ENCODE measurements at regions of chr3 and their contacts with region 1.

Region 1: DNA sequence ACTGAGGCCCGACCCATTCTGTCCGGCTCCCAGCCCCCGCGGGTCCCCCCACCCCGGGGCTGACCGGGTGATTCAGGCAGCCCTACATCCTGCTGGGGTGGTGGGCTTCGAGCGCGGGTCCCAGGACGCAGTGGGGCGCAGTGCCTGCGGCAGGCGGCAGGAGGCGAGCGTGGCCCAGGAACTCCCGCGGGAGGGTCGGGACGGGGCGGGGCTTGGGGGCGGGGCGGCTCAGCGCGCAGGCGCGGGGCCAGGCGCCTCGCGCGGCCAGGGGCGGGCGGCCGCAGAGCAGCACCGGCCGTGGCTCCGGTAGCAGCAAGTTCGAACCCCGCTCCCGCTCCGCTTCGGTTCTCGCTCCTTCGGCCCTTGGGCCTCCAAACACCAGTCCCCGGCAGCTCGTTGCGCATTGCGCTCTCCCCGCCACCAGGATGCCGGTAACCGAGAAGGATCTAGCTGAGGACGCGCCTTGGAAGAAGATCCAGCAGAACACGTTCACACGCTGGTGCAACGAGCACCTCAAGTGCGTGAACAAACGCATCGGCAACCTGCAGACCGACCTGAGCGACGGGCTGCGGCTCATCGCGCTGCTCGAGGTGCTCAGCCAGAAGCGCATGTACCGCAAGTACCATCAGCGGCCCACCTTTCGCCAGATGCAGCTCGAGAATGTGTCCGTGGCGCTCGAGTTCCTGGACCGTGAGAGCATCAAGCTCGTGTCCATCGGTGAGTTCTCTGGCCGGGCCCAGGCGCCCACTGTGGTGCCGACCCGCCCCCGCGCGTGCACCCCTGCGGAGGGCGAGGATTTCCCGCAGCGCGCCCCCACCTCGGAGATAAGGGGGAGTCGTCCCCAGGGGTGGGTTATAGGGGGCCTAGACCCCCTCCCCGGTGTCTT is at the start of gene FLNB:
- DNase-seq: peak; percentile 75
- ATAC-seq: peak; percentile 96
- total RNA-seq, gene FLNB: 30.0 TPM

Region 2: DNA sequence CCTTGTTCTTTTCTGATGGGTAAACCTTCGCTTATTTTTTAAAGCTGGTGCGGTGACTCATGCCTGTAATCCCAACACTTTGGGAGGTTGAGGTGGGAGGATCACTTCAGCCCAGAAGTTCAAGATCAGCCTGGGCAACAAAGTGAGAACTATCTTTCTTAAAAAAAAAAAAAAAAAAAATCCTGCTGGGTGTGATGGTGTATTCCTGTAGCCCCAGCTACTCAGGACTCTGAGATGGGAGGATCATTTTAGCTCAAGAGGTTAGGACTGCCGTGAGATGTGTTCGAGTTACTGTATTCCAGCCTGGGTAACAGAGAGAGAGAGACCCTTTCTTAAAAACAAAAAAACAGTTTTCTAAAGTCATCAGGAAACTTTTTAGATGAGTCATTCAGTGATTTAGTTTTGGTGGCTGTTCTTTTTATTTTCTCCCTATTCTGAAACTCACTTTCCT is 214.6 kb before region 1 on chr3:
- intact Hi-C with region 1: no loop called
- DNase-seq: no peak
- ATAC-seq: no peak

Region 3: DNA sequence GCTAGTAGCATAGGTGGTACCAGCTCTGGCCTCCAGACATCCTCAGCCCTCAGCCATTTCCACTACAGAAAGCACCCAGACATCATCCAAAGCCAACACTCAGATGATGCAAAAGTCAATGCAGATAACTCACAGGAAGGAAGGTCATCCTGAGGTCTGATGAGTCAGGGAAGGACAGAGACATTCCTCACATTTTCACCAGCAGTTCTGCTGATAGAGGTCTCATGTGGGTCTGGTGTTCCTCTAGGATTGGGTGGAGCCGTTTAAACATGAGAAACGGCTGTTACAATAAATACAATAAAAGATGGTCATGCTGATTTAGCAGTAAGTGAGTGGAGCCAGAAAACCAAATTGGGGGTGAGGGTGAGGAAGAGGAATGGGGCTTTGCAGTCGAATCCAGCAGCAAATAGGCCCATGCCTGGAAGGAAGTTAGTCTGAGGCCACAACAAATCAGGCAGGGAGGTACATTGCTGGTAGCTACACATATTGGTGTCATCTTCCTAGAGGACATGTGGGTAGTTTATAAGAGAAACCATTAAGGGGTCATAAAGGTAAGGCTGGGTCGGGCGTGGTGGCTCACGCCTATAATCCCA is 33.5 kb before region 1 on chr3:
- intact Hi-C with region 1: no loop called
- DNase-seq: no peak
- ATAC-seq: peak; percentile 50

Region 4: GRCh38 chr3:58167431-58168351 is 159.3 kb after region 1 on chr3:
- intact Hi-C with region 1: loop called (anchors 5 kb)
- DNase-seq: peak; percentile 73
- ATAC-seq: peak; percentile 76

Measured in Right ventricle myocardium superior (tissue), 1 donor.